SK-N-SH (cell line): ENCODE measurements at regions of chr1 and their contacts with region 1.

Region 1: DNA sequence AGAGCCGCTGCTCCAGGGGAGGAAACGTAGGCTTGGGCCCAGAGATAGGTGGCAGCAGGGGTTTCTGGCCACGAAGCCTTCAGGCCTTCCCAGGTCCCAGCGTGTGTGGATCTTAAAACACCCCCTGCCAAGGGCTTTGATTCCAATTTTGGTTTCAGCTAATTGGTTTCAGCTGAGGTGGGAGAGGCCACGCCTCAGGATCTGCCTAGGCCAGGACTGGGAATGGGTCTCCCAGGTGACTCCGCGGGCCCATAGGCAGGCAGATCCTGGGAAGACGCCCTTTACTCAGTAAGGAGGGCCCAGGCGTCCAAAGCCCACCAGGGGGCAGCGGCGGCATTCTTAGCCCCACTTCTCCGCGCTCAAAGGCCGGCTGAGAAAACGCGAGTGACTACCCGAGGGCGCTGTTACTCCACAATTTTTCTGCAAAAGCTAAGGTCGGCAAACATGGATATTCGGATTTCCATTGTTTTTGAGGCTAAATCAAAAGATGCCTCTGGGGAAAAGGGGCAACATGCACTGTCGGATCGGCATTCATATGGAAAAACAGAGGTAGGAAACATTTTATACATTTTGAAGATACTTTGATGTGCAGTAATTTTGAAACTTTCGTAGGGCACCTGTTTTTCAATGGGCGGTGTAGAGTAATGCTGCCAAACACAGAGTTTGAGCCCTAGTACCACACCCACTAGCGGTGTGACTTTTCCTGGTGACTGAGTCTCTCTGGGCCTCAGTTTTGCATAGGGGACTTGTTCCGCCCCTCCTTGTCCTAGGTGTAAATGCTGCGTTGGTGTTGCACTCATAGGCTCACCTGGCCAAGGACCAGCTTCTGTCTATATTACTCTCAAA is 31.8 kb upstream of the BCL10 start:
- DNase-seq: peak; percentile 83
- H3K4me3 ChIP-seq: peak overlapping the region in 1 of 2 experiments; percentile 10; a peak in 1 of 4 replicates
- H3K27ac ChIP-seq: peak overlapping the region in 1 of 2 experiments; percentile 28; a peak in 3 of 4 replicates
- H3K4me1 ChIP-seq: peaks cover 6 to 7% of the 10 kb centered on the region in 2 experiments; a peak in 2 of 4 replicates
- H3K27me3 ChIP-seq: no peaks in the 10 kb centered on the region
- CTCF ChIP-seq: peak; percentile 99
- EP300 ChIP-seq: peak in 1 of 2 experiments; percentile 26; a peak in 1 of 4 replicates
- RAD21 ChIP-seq: peak; percentile 100

Region 2: DNA sequence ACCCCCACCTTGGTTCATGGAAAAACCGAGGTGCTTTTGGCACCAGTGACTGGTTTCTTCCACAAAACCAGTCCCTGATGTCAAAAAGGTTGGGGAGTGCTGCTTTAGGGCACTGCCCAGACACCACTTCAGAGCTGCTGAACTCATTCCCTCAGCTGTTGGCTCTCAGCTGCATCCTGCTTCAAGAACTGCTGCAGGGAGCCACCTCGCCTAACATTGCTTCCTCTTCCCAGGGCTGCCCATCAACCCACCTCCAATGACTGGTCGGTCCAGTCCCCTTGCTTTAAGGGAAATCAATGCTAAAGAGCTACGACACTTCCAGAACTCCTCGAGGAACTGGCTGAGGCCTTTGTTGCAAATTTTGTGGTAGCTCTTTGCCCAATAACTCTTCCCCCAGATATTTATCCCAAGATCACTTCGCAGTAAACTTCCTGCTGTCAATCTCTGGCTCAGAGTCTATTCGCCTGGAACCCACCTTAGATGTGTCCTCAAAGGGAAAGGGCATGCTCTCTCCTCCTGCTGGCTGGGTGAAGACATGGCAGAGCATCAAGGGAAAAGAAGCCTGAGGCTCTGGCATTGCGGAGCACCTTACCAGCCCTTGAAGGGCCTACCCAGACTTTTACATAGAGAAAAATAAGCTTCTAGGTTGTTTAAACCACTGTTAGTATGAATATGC is 77.8 kb before region 1 on chr1:
- CTCF ChIA-PET with region 1: no interaction called
- POLR2A ChIA-PET with region 1: no interaction called
- DNase-seq: no peak
- H3K4me3 ChIP-seq: no peak overlapping the region
- H3K27ac ChIP-seq: no peak overlapping the region
- H3K4me1 ChIP-seq: no peaks in the 10 kb centered on the region
- H3K27me3 ChIP-seq: peaks cover 29% of the 10 kb centered on the region; the same call in 1 of the 2 replicates
- CTCF ChIP-seq: peak; percentile 29
- EP300 ChIP-seq: no peak
- RAD21 ChIP-seq: no peak

Region 3: GRCh38 chr1:85322655-85323054 is 14.4 kb after region 1 on chr1:
- CTCF ChIA-PET with region 1: interaction called, 14 read pairs
- POLR2A ChIA-PET with region 1: no interaction called
- DNase-seq: no peak
- H3K4me3 ChIP-seq: no peak overlapping the region
- H3K27ac ChIP-seq: peak overlapping the region; percentile 5 to 100; a peak in 3 of 4 replicates
- H3K4me1 ChIP-seq: peaks cover 8 to 68% of the 10 kb centered on the region in 2 experiments
- H3K27me3 ChIP-seq: no peaks in the 10 kb centered on the region
- CTCF ChIP-seq: no peak
- EP300 ChIP-seq: peak in 1 of 2 experiments; percentile 38; a peak in 1 of 4 replicates
- RAD21 ChIP-seq: no peak

Region 4: DNA sequence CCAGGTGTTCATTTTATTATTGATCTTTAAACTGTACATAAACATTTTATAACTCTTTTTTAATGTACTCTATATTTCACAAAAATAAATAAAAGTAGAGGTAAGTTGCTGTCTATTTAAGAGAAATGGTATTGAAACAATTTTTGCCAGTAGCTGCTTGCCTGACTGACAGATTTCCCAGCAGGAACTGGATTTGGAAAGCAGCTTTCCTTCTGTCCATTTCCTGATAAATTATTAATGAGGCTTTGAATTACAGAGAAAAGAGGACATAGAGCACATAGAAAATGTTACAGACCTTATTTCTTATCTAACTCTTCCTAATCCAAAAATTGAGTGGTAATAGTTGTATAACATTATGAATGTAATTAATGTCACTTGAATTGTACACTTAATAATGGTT is 47.9 kb after region 1 on chr1:
- CTCF ChIA-PET with region 1: no interaction called
- POLR2A ChIA-PET with region 1: no interaction called
- DNase-seq: no peak
- H3K4me3 ChIP-seq: no peak overlapping the region
- H3K27ac ChIP-seq: no peak overlapping the region; a peak in 1 of 4 replicates
- H3K4me1 ChIP-seq: peaks cover 16 to 68% of the 10 kb centered on the region in 2 experiments; a peak in 3 of 4 replicates
- H3K27me3 ChIP-seq: no peaks in the 10 kb centered on the region
- CTCF ChIP-seq: no peak
- EP300 ChIP-seq: no peak
- RAD21 ChIP-seq: no peak

Region 5: DNA sequence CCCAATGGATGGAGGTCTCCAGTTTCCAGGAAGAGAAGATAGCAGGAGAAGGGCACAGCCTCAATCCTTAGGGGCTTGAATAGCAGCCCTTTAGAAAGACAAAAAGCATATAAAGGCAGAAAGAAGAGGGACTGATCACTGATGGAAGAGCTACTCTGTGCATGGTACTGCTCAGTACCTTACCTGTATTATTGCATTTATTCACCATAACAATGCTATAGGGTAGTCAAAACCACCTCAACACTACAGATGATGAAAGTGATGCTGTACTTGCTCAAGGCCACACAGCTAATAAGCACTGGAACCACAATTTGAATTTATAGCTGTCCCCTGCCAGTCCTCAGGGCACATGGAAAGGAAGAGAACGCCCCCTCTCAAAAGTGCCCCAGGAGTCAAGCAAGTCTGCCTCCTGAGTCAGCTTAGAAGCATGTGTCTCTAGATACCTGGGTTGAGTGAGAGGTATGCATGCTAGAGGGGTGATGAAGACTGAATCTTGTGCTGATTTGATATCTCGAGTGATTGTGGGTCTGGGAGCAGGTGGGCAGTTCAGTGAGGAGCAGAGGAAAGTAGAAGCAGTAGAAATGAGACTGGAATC is 143.1 kb after region 1 on chr1:
- CTCF ChIA-PET with region 1: interaction called, 13 read pairs
- POLR2A ChIA-PET with region 1: no interaction called
- DNase-seq: no peak
- H3K4me3 ChIP-seq: no peak overlapping the region
- H3K27ac ChIP-seq: peak overlapping the region; percentile 35 to 97
- H3K4me1 ChIP-seq: peaks cover 59% of the 10 kb centered on the region in 2 experiments
- H3K27me3 ChIP-seq: no peaks in the 10 kb centered on the region
- CTCF ChIP-seq: no peak
- EP300 ChIP-seq: no peak
- RAD21 ChIP-seq: no peak

Region 6: GRCh38 chr1:85571830-85572229 is 263.6 kb after region 1 on chr1:
- CTCF ChIA-PET with region 1: interaction called, 15 read pairs
- POLR2A ChIA-PET with region 1: no interaction called
- DNase-seq: no peak
- H3K4me3 ChIP-seq: no peak overlapping the region
- H3K27ac ChIP-seq: peak overlapping the region; percentile 25 to 98; a peak in 3 of 4 replicates
- H3K4me1 ChIP-seq: peaks cover 10 to 50% of the 10 kb centered on the region in 2 experiments
- H3K27me3 ChIP-seq: no peaks in the 10 kb centered on the region
- CTCF ChIP-seq: no peak
- EP300 ChIP-seq: no peak
- RAD21 ChIP-seq: no peak

Region 7: GRCh38 chr1:85683292-85684025 is 375.2 kb after region 1 on chr1:
- CTCF ChIA-PET with region 1: interaction called, 19 read pairs
- POLR2A ChIA-PET with region 1: no interaction called
- DNase-seq: no peak
- H3K4me3 ChIP-seq: no peak overlapping the region
- H3K27ac ChIP-seq: no peak overlapping the region
- H3K4me1 ChIP-seq: no peaks in the 10 kb centered on the region
- H3K27me3 ChIP-seq: no peaks in the 10 kb centered on the region
- CTCF ChIP-seq: no peak
- EP300 ChIP-seq: no peak
- RAD21 ChIP-seq: no peak

Region 8: GRCh38 chr1:85894651-85895050 is 586.4 kb after region 1 on chr1:
- CTCF ChIA-PET with region 1: interaction called, 20 read pairs
- POLR2A ChIA-PET with region 1: no interaction called
- DNase-seq: peak; percentile 59
- H3K4me3 ChIP-seq: no peak overlapping the region; a peak in 1 of 4 replicates
- H3K27ac ChIP-seq: no peak overlapping the region
- H3K4me1 ChIP-seq: no peaks in the 10 kb centered on the region
- H3K27me3 ChIP-seq: no peaks in the 10 kb centered on the region
- CTCF ChIP-seq: peak; percentile 61
- EP300 ChIP-seq: no peak
- RAD21 ChIP-seq: peak; percentile 77